H1 (cell line): ENCODE measurements at regions of chr11 and their contacts with region 1.

Region 1: GRCh38 chr11:12288212-12288930 is 89.0 kb upstream of the PARVA start:
- DNase-seq: peak; percentile 82 to 95
- H3K4me3 ChIP-seq: no peak overlapping the region
- H3K27ac ChIP-seq: no peak overlapping the region
- H3K4me1 ChIP-seq: peaks cover 0 to 4% (median 3%) of the 10 kb centered on the region in 4 experiments; a peak in 3 of 7 replicates
- H3K27me3 ChIP-seq: no peaks in the 10 kb centered on the region
- CTCF ChIP-seq: peak; percentile 87 to 93 (median 91)
- EP300 ChIP-seq: no peak
- POLR2A ChIP-seq: no peak
- RAD21 ChIP-seq: peak; percentile 93 to 97

Region 2: DNA sequence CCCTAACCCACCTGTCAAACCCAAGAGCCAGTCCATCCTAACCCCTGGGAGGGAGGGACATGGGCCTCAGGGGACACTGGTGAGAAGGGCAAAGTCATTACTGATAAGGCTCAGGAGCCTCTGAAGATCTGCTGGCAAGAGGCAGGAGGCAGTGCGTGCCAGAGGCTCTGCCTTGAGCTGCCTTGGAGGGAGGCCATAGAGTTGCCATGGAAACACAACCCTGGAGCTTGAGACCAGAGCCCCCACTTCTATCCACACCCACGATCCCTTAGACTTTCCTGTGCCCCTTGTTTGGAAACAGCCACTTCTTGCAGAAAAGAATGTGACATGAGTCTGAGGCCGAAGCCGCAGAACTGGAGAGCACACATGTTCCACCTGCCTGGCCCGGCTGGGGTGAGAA is 845.6 kb before region 1 on chr11:
- CTCF ChIA-PET with region 1: no interaction called
- POLR2A ChIA-PET with region 1: no interaction called
- DNase-seq: no peak
- H3K4me3 ChIP-seq: no peak overlapping the region
- H3K27ac ChIP-seq: no peak overlapping the region
- H3K4me1 ChIP-seq: peaks cover 0 to 3% (median 0%) of the 10 kb centered on the region in 4 experiments; a peak in 3 of 7 replicates
- H3K27me3 ChIP-seq: no peaks in the 10 kb centered on the region
- CTCF ChIP-seq: no peak
- EP300 ChIP-seq: no peak
- POLR2A ChIP-seq: no peak
- RAD21 ChIP-seq: no peak

Region 3: DNA sequence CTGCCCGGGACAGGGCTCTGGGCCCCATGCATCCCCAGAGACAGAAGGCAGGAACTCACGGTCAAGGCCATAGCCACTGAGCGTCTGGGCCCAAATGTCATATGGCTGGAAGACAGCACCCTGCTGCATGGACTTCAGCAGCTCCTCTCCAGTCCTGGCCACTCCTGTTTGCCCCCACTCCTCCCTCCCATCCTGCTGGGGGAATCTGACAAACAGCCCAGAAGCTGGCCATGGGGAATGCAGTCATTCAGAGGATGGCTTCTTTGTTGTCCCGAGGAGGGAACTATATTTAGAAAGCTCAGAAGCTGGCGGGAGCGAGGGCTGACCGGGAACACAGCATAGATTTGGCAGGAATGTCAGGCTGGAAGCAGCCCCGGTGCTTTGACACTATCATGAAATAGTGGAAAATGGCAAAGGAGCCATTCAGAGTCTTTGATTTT is 315.0 kb before region 1 on chr11:
- CTCF ChIA-PET with region 1: no interaction called
- POLR2A ChIA-PET with region 1: no interaction called
- DNase-seq: peak in 1 of 2 experiments; percentile 24
- H3K4me3 ChIP-seq: no peak overlapping the region
- H3K27ac ChIP-seq: no peak overlapping the region
- H3K4me1 ChIP-seq: peaks cover 0 to 3% (median 2%) of the 10 kb centered on the region in 4 experiments; a peak in 2 of 7 replicates
- H3K27me3 ChIP-seq: no peaks in the 10 kb centered on the region
- CTCF ChIP-seq: no peak
- EP300 ChIP-seq: no peak
- POLR2A ChIP-seq: no peak
- RAD21 ChIP-seq: no peak

Region 4: GRCh38 chr11:12052676-12053605 is 235.4 kb before region 1 on chr11:
- CTCF ChIA-PET with region 1: interaction called, 403 read pairs
- POLR2A ChIA-PET with region 1: no interaction called
- DNase-seq: no peak
- H3K4me3 ChIP-seq: no peak overlapping the region
- H3K27ac ChIP-seq: no peak overlapping the region
- H3K4me1 ChIP-seq: peaks cover 0 to 3% (median under 1%) of the 10 kb centered on the region in 4 experiments; a peak in 2 of 7 replicates
- H3K27me3 ChIP-seq: no peaks in the 10 kb centered on the region
- CTCF ChIP-seq: peak; percentile 43 to 69 (median 62)
- EP300 ChIP-seq: no peak
- POLR2A ChIP-seq: no peak
- RAD21 ChIP-seq: peak; percentile 55 to 73

Region 5: GRCh38 chr11:12122083-12122482 is 166.3 kb before region 1 on chr11:
- CTCF ChIA-PET with region 1: interaction called, 12 read pairs
- POLR2A ChIA-PET with region 1: no interaction called
- DNase-seq: peak in 1 of 2 experiments; percentile 58
- H3K4me3 ChIP-seq: no peak overlapping the region
- H3K27ac ChIP-seq: no peak overlapping the region
- H3K4me1 ChIP-seq: no peaks in the 10 kb centered on the region
- H3K27me3 ChIP-seq: 0 out of 7 replicates have a peak, but pooled peaks cover 0 to 3% (median 0%) of the 10 kb centered on the region in 4 experiments
- CTCF ChIP-seq: peak; percentile 81 to 93 (median 87)
- EP300 ChIP-seq: no peak
- POLR2A ChIP-seq: no peak
- RAD21 ChIP-seq: peak; percentile 72 to 80

Region 6: DNA sequence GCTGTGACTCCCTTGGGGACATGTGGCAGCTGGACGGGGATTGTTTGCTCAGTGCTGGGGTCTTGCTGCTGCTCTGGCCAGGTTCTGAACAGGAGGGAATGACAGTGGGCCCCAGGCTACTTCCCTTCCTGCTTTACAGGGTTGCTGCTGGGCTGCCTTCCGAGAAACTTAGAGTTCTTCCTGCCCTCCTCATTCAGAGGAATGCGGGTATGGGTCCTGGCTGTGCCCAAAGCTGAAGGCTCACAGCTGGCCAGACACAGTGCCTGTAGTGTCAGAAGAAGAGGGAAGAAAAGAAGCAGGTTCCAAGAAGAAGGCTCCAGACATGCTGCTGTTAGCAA is 19.3 kb before region 1 on chr11:
- CTCF ChIA-PET with region 1: interaction called, 37 read pairs
- POLR2A ChIA-PET with region 1: no interaction called
- DNase-seq: no peak
- H3K4me3 ChIP-seq: no peak overlapping the region
- H3K27ac ChIP-seq: no peak overlapping the region
- H3K4me1 ChIP-seq: peaks cover 0 to 4% (median 0%) of the 10 kb centered on the region in 4 experiments; a peak in 2 of 7 replicates
- H3K27me3 ChIP-seq: no peaks in the 10 kb centered on the region
- CTCF ChIP-seq: no peak
- EP300 ChIP-seq: no peak
- POLR2A ChIP-seq: no peak
- RAD21 ChIP-seq: no peak

Region 7: GRCh38 chr11:12303421-12304149 is 15.2 kb after region 1 on chr11:
- CTCF ChIA-PET with region 1: interaction called, 23 read pairs
- POLR2A ChIA-PET with region 1: interaction called, 4 read pairs
- DNase-seq: no peak
- H3K4me3 ChIP-seq: no peak overlapping the region
- H3K27ac ChIP-seq: no peak overlapping the region
- H3K4me1 ChIP-seq: no peaks in the 10 kb centered on the region
- H3K27me3 ChIP-seq: no peaks in the 10 kb centered on the region
- CTCF ChIP-seq: no peak
- EP300 ChIP-seq: no peak
- POLR2A ChIP-seq: no peak
- RAD21 ChIP-seq: no peak

Region 8: GRCh38 chr11:12331239-12331874 is 43.0 kb after region 1 on chr11:
- CTCF ChIA-PET with region 1: interaction called, 71 read pairs
- POLR2A ChIA-PET with region 1: no interaction called
- DNase-seq: peak; percentile 53 to 84
- H3K4me3 ChIP-seq: no peak overlapping the region
- H3K27ac ChIP-seq: no peak overlapping the region
- H3K4me1 ChIP-seq: peaks cover 0 to 11% (median 1%) of the 10 kb centered on the region in 4 experiments; a peak in 4 of 7 replicates
- H3K27me3 ChIP-seq: no peaks in the 10 kb centered on the region; a peak in 1 of 7 replicates
- CTCF ChIP-seq: peak; percentile 42 to 83 (median 80)
- EP300 ChIP-seq: no peak
- POLR2A ChIP-seq: no peak
- RAD21 ChIP-seq: peak; percentile 98

Region 9: GRCh38 chr11:12717851-12718291 is 429.5 kb after region 1 on chr11:
- CTCF ChIA-PET with region 1: no interaction called
- POLR2A ChIA-PET with region 1: no interaction called
- DNase-seq: peak in 1 of 2 experiments; percentile 43
- H3K4me3 ChIP-seq: no peak overlapping the region
- H3K27ac ChIP-seq: no peak overlapping the region
- H3K4me1 ChIP-seq: peaks cover 11 to 32% (median 20%) of the 10 kb centered on the region in 4 experiments
- H3K27me3 ChIP-seq: no peaks in the 10 kb centered on the region
- CTCF ChIP-seq: no peak
- EP300 ChIP-seq: no peak
- POLR2A ChIP-seq: no peak
- RAD21 ChIP-seq: no peak

Region 10: GRCh38 chr11:12963792-12964536 is 675.6 kb after region 1 on chr11:
- CTCF ChIA-PET with region 1: interaction called, 36 read pairs
- POLR2A ChIA-PET with region 1: no interaction called
- DNase-seq: peak; percentile 49 to 92
- H3K4me3 ChIP-seq: no peak overlapping the region
- H3K27ac ChIP-seq: no peak overlapping the region
- H3K4me1 ChIP-seq: peaks cover 0 to 2% (median 0%) of the 10 kb centered on the region in 4 experiments; a peak in 1 of 7 replicates
- H3K27me3 ChIP-seq: no peaks in the 10 kb centered on the region
- CTCF ChIP-seq: peak; percentile 66 to 90 (median 79)
- EP300 ChIP-seq: no peak
- POLR2A ChIP-seq: no peak
- RAD21 ChIP-seq: peak; percentile 96 to 98